ENCODE measurements at regions of chr12 and their contacts with region 1.

Region 1: GRCh38 chr12:23707270-23707669 is 242.2 kb downstream of the SOX5 start:
- DNase-seq: no peak
- H3K4me3 ChIP-seq: no peak overlapping the region
- H3K27ac ChIP-seq: no peak overlapping the region
- H3K4me1 ChIP-seq: no peaks in the 10 kb centered on the region
- H3K27me3 ChIP-seq: no peaks in the 10 kb centered on the region
- CTCF ChIP-seq: no peak

Region 2: DNA sequence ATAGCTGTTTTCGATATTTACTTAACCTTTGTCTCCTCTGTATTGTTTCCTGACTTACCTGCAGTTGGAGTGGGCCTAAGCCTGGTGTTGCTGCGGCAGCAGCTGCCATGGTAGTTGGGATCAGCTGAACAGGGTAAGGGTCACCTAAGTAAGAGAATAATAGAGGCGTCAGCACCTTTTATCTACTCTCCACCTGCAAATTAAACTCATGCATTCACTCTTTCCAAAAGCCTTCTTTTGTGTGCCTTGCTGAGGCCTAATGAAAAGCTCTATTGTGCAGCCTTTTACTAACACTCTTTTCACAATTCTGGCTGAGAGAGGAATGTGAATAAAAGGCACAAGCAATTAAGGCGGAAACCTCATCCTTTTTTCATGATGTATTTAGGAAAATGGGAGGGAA is 66.5 kb before region 1 on chr12:
- CTCF ChIA-PET with region 1: no interaction called
- POLR2A ChIA-PET with region 1: interaction called, 10 read pairs
- intact Hi-C with region 1: no loop called
- DNase-seq: no peak
- H3K4me3 ChIP-seq: no peak overlapping the region
- H3K27ac ChIP-seq: no peak overlapping the region
- H3K4me1 ChIP-seq: no peaks in the 10 kb centered on the region
- H3K27me3 ChIP-seq: peaks cover 16% of the 10 kb centered on the region
- CTCF ChIP-seq: no peak

Region 3: GRCh38 chr12:24109381-24110039 is 402.2 kb after region 1 on chr12:
- CTCF ChIA-PET with region 1: no interaction called
- POLR2A ChIA-PET with region 1: no interaction called
- intact Hi-C with region 1: no loop called
- DNase-seq: no peak
- H3K4me3 ChIP-seq: no peak overlapping the region
- H3K27ac ChIP-seq: no peak overlapping the region
- H3K4me1 ChIP-seq: no peaks in the 10 kb centered on the region
- H3K27me3 ChIP-seq: no peaks in the 10 kb centered on the region
- CTCF ChIP-seq: peak; percentile 55; the same call in 1 of the 2 replicates